A549 (cell line): ENCODE measurements at regions of chr13 and their contacts with region 1.

Region 1: DNA sequence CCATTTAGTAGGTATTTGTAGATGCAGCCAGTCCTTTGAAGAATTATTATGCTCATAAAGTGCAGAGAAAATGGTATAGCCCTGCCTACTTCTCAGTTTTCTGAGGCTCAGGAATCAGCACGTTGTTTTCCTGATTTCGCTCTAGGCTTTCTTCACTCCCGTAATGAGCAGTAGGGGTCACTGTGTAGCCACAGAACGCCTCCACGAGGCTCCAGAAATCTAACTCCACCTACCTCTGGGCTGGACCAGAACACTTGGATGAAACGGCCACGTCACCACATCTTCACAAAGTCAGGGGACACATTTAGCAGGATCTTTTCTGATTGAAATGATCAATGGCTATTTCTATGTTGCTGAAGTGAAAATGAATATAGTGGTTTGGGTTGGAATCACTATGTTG is 49.8 kb upstream of the GTF3A start:
- DNase-seq: peak; percentile 76 to 81
- ATAC-seq: peak; percentile 91 to 94
- H3K4me3 ChIP-seq: no peak overlapping the region
- H3K27ac ChIP-seq: no peak overlapping the region
- H3K4me1 ChIP-seq: 0 out of 3 replicates have a peak, but pooled peaks cover 4% of the 10 kb centered on the region
- CTCF ChIP-seq: peak; percentile 67
- EP300 ChIP-seq: no peak
- POLR2A ChIP-seq: no peak
- RAD21 ChIP-seq: peak; percentile 68 to 77

Region 2: DNA sequence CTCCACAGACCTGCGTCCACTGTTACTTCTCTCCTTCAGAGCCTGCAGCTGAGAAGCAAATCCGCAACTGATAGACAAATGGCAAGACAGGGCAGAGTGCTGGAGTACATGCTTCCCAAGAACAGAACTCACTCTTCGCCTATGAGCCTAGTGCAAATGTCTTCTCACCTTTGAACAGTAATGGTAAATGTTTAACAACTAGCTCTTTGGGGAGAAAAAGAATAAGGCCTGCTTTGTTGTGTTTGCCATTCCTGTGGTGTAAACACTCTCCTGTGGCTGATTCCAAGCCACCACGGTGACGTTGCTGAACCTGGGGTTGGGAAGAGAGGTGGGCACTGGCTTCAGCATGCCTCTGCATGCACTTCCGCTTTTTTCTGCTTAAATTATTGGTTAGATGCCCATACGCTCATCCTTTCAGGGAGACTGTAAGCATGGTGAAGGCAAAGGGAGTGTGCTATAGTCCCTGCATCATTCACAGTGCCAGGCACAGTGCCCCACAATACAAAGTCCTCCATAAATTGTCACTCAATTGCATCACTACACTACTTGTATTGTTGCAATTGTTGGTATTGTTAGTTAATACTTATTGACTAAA is 21.7 kb after region 1 on chr13:
- CTCF ChIA-PET with region 1: no interaction called
- POLR2A ChIA-PET with region 1: no interaction called
- DNase-seq: no peak
- ATAC-seq: no peak
- H3K4me3 ChIP-seq: no peak overlapping the region
- H3K27ac ChIP-seq: no peak overlapping the region
- H3K4me1 ChIP-seq: no peaks in the 10 kb centered on the region
- CTCF ChIP-seq: no peak
- EP300 ChIP-seq: no peak
- POLR2A ChIP-seq: no peak
- RAD21 ChIP-seq: no peak

Region 3: DNA sequence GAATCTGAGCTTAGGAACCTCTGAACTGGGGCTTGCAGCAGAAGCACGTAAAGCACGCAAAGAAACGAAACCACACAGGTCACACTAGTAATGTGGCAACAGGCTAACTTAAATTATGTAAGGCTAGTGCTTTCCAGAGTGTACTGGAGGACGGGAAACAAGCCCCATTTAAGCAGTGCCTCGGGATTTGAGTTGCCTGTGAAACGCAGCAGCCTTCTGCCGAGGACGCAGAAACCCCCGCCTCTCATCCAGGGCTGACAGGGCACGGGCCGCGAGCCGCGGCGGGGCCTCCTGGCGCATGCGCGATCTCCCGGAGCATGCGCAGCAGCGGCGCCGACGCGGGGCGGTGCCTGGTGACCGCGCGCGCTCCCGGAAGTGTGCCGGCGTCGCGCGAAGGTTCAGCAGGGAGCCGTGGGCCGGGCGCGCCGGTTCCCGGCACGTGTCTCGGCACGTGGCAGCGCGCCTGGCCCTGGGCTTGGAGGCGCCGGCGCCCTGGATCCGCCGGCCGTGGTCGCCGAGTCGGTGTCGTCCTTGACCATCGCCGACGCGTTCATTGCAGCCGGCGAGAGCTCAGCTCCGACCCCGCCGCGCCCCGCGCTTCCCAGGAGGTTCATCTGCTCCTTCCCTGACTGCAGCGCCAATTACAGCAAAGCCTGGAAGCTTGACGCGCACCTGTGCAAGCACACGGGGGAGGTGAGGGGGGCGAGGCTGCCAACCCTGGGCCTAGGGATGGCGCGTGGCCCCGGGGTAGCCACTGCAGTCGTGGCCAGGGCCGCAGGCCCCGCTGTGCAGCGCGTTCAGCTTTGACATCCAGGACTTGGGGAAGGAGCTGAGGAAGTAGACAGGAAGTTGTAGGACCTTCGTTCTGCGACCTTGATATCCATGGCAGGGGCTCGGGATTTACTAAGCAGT is 49.9 kb after region 1 on chr13 and contains the start of gene GTF3A:
- CTCF ChIA-PET with region 1: interaction called, 28 read pairs
- POLR2A ChIA-PET with region 1: no interaction called
- DNase-seq: peak; percentile 80 to 85
- ATAC-seq: peak; percentile 82 to 86
- H3K4me3 ChIP-seq: peak within 1 kb of the TSS; percentile 67
- H3K27ac ChIP-seq: peak within 1 kb of the TSS; percentile 86 to 97
- H3K4me1 ChIP-seq: peaks cover 17% of the 10 kb centered on the region
- CTCF ChIP-seq: no peak
- EP300 ChIP-seq: no peak
- POLR2A ChIP-seq: peak; percentile 75
- RAD21 ChIP-seq: no peak
- polyA plus RNA-seq, gene GTF3A: 125 and 132 TPM in 2 replicates

Region 4: DNA sequence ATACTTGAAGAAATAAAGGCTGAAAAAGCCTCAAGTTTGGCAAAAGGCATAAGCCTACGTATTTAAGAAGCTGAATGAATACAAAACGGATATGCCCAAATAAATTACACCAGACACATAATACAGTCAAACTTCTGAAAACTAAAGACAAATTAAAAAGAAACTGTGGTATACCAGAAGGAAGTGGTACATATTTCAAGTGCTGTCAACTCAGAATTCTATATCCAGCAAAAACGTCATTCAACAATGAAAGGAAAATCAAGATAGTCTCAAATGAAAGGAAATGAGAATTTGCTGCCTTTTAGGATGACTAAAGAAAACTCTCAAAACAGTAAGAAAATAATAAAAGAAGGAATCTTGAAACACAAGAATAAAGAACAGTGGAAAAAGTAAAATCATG is 316.6 kb after region 1 on chr13:
- CTCF ChIA-PET with region 1: no interaction called
- POLR2A ChIA-PET with region 1: no interaction called
- DNase-seq: no peak
- ATAC-seq: no peak
- H3K4me3 ChIP-seq: no peak overlapping the region
- H3K27ac ChIP-seq: no peak overlapping the region
- H3K4me1 ChIP-seq: no peaks in the 10 kb centered on the region
- CTCF ChIP-seq: no peak
- EP300 ChIP-seq: no peak
- POLR2A ChIP-seq: no peak
- RAD21 ChIP-seq: no peak

Region 5: GRCh38 chr13:27977476-27978300 is 603.0 kb after region 1 on chr13:
- CTCF ChIA-PET with region 1: interaction called, 12 read pairs
- POLR2A ChIA-PET with region 1: no interaction called
- DNase-seq: peak in 1 of 2 experiments; percentile 29
- ATAC-seq: peak; percentile 27 to 68; a peak in 3 of 6 replicates
- H3K4me3 ChIP-seq: peak overlapping the region; percentile 31; the same call in 2 of the 3 replicates
- H3K27ac ChIP-seq: no peak overlapping the region
- H3K4me1 ChIP-seq: no peaks in the 10 kb centered on the region; the same call in 2 of the 3 replicates
- CTCF ChIP-seq: no peak
- EP300 ChIP-seq: no peak
- POLR2A ChIP-seq: no peak
- RAD21 ChIP-seq: no peak